H1 (cell line): ENCODE measurements at regions of chr3 and their contacts with region 1.

Region 1: DNA sequence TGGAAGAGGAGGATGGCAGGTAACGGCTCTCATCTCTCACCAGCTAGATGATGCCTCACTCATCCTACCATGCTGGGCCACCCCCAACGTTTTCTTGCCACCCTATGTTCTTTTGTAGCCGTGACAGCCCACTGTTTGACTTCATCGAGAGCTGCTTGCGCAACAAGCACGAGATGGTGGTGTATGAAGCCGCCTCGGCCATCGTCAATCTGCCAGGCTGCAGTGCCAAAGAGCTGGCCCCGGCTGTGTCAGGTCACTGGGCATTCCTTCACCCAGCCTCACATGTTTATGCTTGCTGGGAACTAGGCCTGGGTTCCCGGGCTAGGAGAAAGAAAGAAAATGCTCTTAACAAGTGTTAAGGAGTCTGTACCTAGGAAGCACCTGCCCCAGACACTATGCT is 8.2 kb downstream of the COPG1 start:
- DNase-seq: no peak
- H3K4me3 ChIP-seq: no peak overlapping the region
- H3K27ac ChIP-seq: no peak overlapping the region
- H3K4me1 ChIP-seq: no peaks in the 10 kb centered on the region
- H3K27me3 ChIP-seq: no peaks in the 10 kb centered on the region
- CTCF ChIP-seq: no peak
- EP300 ChIP-seq: no peak
- POLR2A ChIP-seq: no peak
- RAD21 ChIP-seq: no peak

Region 2: DNA sequence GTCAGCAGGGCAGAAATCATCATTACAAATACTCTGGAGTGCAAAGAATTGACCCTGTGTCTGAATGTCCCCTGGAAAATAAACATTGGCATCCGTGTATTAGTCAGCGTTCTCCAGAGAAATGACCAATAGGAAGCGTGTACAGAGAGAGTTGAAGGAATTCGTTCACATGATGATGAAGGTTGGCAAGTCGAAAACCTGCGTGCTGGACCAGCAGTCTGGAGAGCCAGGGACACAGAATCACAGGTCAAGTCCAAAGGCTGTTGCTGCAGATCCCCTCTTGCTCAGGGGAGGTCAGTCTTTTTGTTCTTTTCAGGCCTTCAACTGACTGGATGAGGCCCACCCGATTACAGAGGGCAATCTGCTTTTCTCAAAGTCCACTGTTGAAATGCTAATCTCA is 180.4 kb before region 1 on chr3:
- CTCF ChIA-PET with region 1: no interaction called
- POLR2A ChIA-PET with region 1: no interaction called
- DNase-seq: no peak
- H3K4me3 ChIP-seq: no peak overlapping the region
- H3K27ac ChIP-seq: no peak overlapping the region
- H3K4me1 ChIP-seq: no peaks in the 10 kb centered on the region
- H3K27me3 ChIP-seq: no peaks in the 10 kb centered on the region
- CTCF ChIP-seq: no peak
- EP300 ChIP-seq: no peak
- POLR2A ChIP-seq: no peak
- RAD21 ChIP-seq: no peak

Region 3: GRCh38 chr3:129278439-129278970 is 20.9 kb after region 1 on chr3 and contains the start of gene HMCES:
- CTCF ChIA-PET with region 1: interaction called, 3 read pairs
- POLR2A ChIA-PET with region 1: interaction called, 10 read pairs
- DNase-seq: peak; percentile 66 to 96
- H3K4me3 ChIP-seq: peak within 1 kb of the TSS; percentile 92 to 96 (median 94)
- H3K27ac ChIP-seq: peak within 1 kb of the TSS; percentile 89
- H3K4me1 ChIP-seq: peaks cover 0 to 13% (median 6%) of the 10 kb centered on the region in 4 experiments; a peak in 6 of 7 replicates
- H3K27me3 ChIP-seq: no peaks in the 10 kb centered on the region
- CTCF ChIP-seq: 0 out of 4 replicates have a peak, but pooled peaks of 1 of the 3 experiments have one; percentile 1
- EP300 ChIP-seq: no peak
- POLR2A ChIP-seq: peak in 1 of 2 experiments; percentile 45; a peak in 2 of 3 replicates
- RAD21 ChIP-seq: no peak
- total RNA-seq, gene HMCES: 46.7 and 49.5 TPM in 2 replicates